ENCODE measurements at regions of chr3 and their contacts with region 1.

Region 1: GRCh38 chr3:137032465-137033120 is 74.8 kb downstream of the IL20RB start:
- DNase-seq: peak; percentile 86
- H3K4me3 ChIP-seq: peak overlapping the region; percentile 23 to 61 (median 26)
- H3K27ac ChIP-seq: no peak overlapping the region
- H3K4me1 ChIP-seq: peaks cover 10% of the 10 kb centered on the region
- H3K27me3 ChIP-seq: peaks cover 10 to 12% of the 10 kb centered on the region in 2 experiments
- CTCF ChIP-seq: peak; percentile 93 to 94
- POLR2A ChIP-seq: no peak

Region 2: DNA sequence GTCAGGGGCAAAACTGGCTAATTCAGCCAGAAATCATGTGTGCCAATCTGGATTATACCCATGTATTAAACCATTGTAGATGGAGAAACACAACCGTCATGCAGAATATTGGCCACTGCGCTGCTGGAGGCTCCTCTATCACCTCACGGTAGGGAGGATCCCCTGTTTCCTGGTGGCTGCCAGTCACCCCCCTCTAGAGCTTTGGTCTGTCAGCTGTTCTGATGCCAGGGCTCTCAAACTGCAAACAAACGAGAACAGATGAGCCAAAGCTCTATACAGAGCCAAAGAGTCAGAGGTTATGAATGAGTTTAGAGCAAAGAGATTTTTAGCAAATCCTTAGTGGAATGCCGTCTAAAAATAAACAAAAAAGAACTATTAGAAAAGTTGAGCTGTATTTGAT is 12.3 kb before region 1 on chr3:
- CTCF ChIA-PET with region 1: interaction called, 10 read pairs
- POLR2A ChIA-PET with region 1: no interaction called
- dilution Hi-C with region 1: no loop called
- intact Hi-C with region 1: no loop called
- DNase-seq: no peak
- H3K4me3 ChIP-seq: no peak overlapping the region
- H3K27ac ChIP-seq: no peak overlapping the region
- H3K4me1 ChIP-seq: no peaks in the 10 kb centered on the region
- H3K27me3 ChIP-seq: no peaks in the 10 kb centered on the region
- CTCF ChIP-seq: no peak
- POLR2A ChIP-seq: no peak

Region 3: DNA sequence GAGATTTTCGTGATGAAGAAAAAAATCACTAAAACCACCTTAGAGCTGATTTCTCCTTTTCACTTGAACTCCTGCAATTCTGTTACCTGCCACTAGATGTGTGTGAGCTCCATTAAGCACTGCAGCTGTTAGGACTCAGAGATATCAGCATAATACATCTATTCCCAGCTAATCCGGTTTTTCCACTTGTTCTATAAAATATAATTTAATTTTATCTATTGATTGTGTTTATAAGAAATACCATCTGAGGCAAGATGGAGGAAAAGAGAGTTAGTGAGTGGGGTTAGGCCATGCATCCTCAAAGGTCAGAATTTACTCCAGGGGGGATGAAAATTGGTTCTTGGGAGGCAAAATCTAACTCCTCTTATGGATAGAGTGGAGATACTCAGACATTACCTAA is 77.9 kb after region 1 on chr3:
- CTCF ChIA-PET with region 1: interaction called, 14 read pairs
- POLR2A ChIA-PET with region 1: no interaction called
- dilution Hi-C with region 1: no loop called
- intact Hi-C with region 1: loop called (anchors 2 kb)
- DNase-seq: peak; percentile 16
- H3K4me3 ChIP-seq: no peak overlapping the region
- H3K27ac ChIP-seq: no peak overlapping the region
- H3K4me1 ChIP-seq: no peaks in the 10 kb centered on the region
- H3K27me3 ChIP-seq: peaks cover 11 to 19% of the 10 kb centered on the region in 2 experiments
- CTCF ChIP-seq: peak; percentile 38 to 64
- POLR2A ChIP-seq: no peak

Region 4: DNA sequence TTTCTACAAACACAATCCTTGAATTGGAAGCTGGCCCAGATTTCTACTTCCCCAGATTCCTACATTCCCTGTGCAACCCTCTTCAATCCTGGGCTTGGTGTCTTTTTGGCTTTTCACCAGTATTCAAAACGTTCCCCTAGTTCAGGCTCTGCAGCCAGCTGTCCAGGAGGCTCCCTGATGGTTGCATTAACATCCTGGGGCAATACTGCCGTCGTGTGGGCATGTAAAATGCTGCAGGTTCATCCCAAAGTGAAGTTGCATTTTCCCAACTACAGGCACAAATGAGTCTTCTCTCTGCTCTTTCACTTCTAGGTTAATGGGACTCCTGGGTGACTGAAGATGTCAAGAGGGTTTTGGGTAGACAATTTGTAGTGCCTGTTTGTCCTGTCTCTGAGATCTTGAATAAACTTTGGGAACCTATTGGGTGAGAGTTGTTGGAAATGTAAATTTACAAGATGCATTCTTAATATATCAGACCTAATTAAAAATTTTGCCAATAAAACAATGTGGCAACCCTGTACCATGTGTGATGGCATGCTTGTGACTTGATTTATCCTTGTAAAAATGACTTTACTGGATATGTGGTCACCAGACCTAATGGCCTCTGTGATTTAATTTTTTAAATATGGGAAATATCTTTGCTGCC is 760.2 kb after region 1 on chr3:
- CTCF ChIA-PET with region 1: no interaction called
- POLR2A ChIA-PET with region 1: no interaction called
- dilution Hi-C with region 1: no loop called
- intact Hi-C with region 1: loop called (anchors 5 kb)
- DNase-seq: no peak
- H3K4me3 ChIP-seq: no peak overlapping the region
- H3K27ac ChIP-seq: no peak overlapping the region
- H3K4me1 ChIP-seq: no peaks in the 10 kb centered on the region
- H3K27me3 ChIP-seq: no peaks in the 10 kb centered on the region
- CTCF ChIP-seq: peak; percentile 19 to 45
- POLR2A ChIP-seq: no peak

Region 5: DNA sequence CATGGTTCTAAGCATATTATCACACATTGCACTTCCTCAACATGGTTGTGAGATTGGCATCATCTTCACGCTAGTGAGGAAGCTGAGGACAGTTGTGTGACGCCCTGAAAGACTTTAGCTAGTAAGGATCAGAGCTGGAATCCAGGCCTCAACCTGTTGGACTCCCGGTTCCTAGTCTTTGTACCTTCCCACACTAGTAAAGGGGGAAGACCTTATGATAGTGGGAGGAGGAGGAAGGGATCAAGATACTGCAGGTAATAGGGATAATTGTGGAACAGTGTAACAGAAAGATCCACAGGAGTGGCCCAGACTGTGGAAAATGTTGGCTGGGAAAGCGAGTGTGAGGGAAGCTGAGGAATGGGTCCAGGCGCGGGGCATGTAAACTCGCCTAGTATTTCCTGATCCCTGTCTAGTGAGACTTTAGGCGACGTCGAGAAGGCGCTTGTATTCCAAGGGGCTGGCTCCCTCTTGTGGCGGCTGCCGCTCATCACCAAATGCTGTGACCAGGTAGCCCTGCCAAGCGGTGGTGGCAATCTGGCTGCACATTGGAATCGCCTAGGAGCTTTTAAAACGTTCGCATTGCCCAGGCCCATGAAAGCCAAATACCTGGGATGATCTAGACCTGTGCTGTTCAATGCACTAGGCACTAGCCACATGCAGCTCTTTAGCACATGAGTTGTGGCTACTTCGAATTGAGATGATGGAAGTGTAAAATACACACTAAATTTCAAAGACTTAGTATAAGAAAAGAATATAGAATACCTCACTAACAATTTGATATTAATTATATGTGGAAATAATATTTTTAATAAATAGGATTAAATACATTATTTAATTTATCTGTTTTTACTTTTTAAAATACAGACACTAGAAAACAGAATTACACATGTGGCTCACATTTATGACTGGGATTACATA is 938.6 kb after region 1 on chr3:
- CTCF ChIA-PET with region 1: interaction called, 16 read pairs
- POLR2A ChIA-PET with region 1: no interaction called
- dilution Hi-C with region 1: no loop called
- intact Hi-C with region 1: loop called (anchors 2 kb)
- DNase-seq: peak; percentile 59
- H3K4me3 ChIP-seq: no peak overlapping the region
- H3K27ac ChIP-seq: no peak overlapping the region
- H3K4me1 ChIP-seq: no peaks in the 10 kb centered on the region
- H3K27me3 ChIP-seq: peaks cover 2 to 5% of the 10 kb centered on the region in 2 experiments
- CTCF ChIP-seq: peak; percentile 82 to 92
- POLR2A ChIP-seq: no peak